B cell (primary cell): ENCODE measurements at regions of chr16 and their contacts with region 1.

Region 1: DNA sequence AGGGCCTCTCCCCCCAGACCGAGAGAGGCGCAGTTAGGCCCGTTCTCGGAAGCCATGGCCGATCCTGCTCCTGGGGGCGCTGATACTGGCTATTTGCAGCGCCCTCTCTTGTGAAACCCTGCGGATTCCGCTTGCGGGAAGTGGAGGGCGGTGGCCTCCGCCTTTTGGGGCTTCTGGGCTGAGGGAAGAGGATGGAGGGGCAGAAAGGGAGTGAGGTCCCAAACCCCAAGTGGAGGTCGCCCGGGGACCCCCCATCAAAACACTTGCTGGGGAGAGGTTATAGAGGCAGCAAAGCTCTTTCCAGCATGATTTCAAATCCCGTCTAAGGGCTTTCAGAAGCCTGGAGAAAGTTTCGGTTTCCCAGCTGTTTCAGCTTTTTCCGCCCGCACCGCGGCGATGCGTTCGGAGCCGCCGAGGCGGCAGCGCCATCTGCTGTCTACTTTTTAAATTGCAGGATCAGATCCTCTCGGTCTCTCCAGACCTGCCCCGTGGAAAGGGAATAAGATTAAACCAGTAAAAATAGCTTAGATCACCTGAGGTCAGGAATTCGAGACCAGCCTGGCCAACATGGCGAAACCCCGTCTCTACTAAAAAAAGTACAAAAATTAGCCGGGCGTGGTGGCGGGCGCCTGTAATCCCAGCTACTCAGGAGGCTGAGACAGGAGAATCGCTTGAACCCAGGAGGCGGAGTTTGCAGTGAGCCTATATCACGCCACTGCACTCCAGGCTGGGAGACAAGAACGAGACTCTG is 15.8 kb downstream of the SNX20 start:
- DNase-seq: peak; percentile 81
- ATAC-seq: peak; percentile 71
- H3K4me3 ChIP-seq: peak overlapping the region; percentile 43 to 59 (median 49)
- H3K4me3 Mint-ChIP-seq: peak overlapping the region; percentile 86
- H3K27ac ChIP-seq: peak overlapping the region in 1 of 2 donors; percentile 7
- H3K27ac Mint-ChIP-seq: peak overlapping the region; percentile 79
- H3K4me1 ChIP-seq: peaks cover 10 to 21% of the 10 kb centered on the region in 2 donors
- H3K4me1 Mint-ChIP-seq: peaks cover 25% of the 10 kb centered on the region
- H3K27me3 ChIP-seq: no peaks in the 10 kb centered on the region
- H3K27me3 Mint-ChIP-seq: no peaks in the 10 kb centered on the region
- CTCF ChIP-seq: peak; percentile 93

Region 2: GRCh38 chr16:49183911-49184310 is 1481.4 kb before region 1 on chr16:
- CTCF ChIA-PET with region 1: no interaction called
- POLR2A ChIA-PET with region 1: no interaction called
- intact Hi-C with region 1: no loop called
- DNase-seq: no peak
- ATAC-seq: no peak
- H3K4me3 ChIP-seq: no peak overlapping the region
- H3K4me3 Mint-ChIP-seq: no peak overlapping the region
- H3K27ac ChIP-seq: no peak overlapping the region
- H3K27ac Mint-ChIP-seq: no peak overlapping the region
- H3K4me1 ChIP-seq: no peaks in the 10 kb centered on the region
- H3K4me1 Mint-ChIP-seq: no peaks in the 10 kb centered on the region
- H3K27me3 ChIP-seq: no peaks in the 10 kb centered on the region
- H3K27me3 Mint-ChIP-seq: no peaks in the 10 kb centered on the region
- CTCF ChIP-seq: no peak

Region 3: DNA sequence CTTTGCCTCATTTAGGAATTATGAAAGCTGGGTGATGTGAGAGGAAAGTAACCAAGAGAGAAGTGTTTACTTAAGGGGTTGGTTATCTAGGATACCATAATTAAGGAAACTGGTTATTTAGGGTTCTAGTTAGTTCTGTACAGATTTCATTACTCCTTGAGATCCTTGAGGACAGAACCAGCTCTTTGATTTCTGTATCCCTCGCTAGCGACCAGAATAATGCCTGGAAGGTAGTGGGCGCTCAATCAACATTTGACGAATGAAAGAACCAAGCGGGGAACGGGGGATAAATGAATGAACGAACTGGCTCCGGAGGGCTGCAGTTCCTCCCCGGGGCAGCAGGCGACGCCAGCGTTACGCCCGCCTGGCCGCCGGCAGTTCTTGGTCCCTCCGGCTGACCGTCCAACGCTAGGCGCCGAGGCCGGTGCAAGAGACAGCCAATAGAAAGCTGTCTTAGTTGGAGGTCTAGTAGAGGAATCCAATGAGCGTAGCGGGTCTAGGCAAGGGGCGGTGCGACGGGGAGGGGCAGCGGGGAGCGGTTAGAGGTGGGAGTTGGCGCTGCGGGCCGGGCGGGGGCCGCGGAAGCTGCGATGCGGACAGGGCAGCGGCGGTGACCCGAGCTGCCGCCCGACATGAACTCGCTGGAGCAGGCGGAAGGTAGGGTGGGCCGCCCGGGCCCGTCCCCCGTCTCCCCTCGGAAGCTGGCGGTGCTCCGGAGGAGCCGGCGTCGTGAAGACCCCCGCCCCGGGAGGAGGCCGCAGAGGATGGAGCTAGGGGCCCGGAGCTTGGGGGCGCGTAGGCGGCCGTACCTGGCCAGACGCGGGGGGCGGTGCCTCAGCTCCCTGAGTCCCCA is 640.4 kb before region 1 on chr16 and contains the start of gene CNEP1R1:
- CTCF ChIA-PET with region 1: interaction called, 33 read pairs
- POLR2A ChIA-PET with region 1: no interaction called
- intact Hi-C with region 1: loop called (anchors 5 kb)
- DNase-seq: peak; percentile 98
- ATAC-seq: peak; percentile 94
- H3K4me3 ChIP-seq: peak within 1 kb of the TSS; percentile 87 to 93 (median 92)
- H3K4me3 Mint-ChIP-seq: peak within 1 kb of the TSS; percentile 93
- H3K27ac ChIP-seq: peak within 1 kb of the TSS; percentile 31 to 78
- H3K27ac Mint-ChIP-seq: peak within 1 kb of the TSS; percentile 89
- H3K4me1 ChIP-seq: peaks cover 12 to 14% of the 10 kb centered on the region in 2 donors
- H3K4me1 Mint-ChIP-seq: peaks cover 23% of the 10 kb centered on the region
- H3K27me3 ChIP-seq: no peaks in the 10 kb centered on the region
- H3K27me3 Mint-ChIP-seq: peaks cover 7% of the 10 kb centered on the region
- CTCF ChIP-seq: peak; percentile 100
- total RNA-seq, gene CNEP1R1: 32.9 and 36.9 TPM in 2 replicates

Region 4: DNA sequence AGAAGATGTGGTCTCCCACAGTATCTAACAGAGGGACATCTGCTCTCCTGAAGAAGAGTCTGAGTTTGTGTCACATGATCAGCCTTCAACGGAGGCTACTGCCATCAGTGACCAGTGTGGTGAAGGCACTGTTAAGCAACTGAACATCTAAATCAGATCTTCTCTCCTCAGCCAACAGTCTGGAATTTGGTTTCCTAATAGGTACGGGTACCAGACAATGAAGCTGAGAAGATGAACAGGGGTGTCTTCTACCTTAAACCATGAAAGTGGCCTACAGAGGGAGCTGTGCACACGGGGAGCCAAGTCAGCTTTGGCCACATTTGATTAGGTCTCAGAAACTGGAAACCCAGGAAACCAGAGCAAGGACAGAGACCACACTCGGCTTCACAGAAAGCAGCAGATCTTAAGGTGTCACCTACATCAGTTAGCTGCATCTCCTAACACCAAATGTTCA is 338.3 kb before region 1 on chr16:
- CTCF ChIA-PET with region 1: interaction called, 33 read pairs
- POLR2A ChIA-PET with region 1: no interaction called
- intact Hi-C with region 1: loop called (anchors 1 kb)
- DNase-seq: peak; percentile 50
- ATAC-seq: peak; percentile 85
- H3K4me3 ChIP-seq: no peak overlapping the region
- H3K4me3 Mint-ChIP-seq: peak overlapping the region; percentile 24
- H3K27ac ChIP-seq: peak overlapping the region; percentile 38 to 63
- H3K27ac Mint-ChIP-seq: peak overlapping the region; percentile 74
- H3K4me1 ChIP-seq: peaks cover 0 to 31% of the 10 kb centered on the region in 2 donors
- H3K4me1 Mint-ChIP-seq: peaks cover 51% of the 10 kb centered on the region
- H3K27me3 ChIP-seq: no peaks in the 10 kb centered on the region
- H3K27me3 Mint-ChIP-seq: no peaks in the 10 kb centered on the region
- CTCF ChIP-seq: peak; percentile 76

Region 5: GRCh38 chr16:50368410-50369132 is 296.7 kb before region 1 on chr16 and contains the start of gene BRD7:
- CTCF ChIA-PET with region 1: interaction called, 16 read pairs
- POLR2A ChIA-PET with region 1: no interaction called
- intact Hi-C with region 1: loop called (anchors 2 kb)
- DNase-seq: peak; percentile 85
- ATAC-seq: peak; percentile 95
- H3K4me3 ChIP-seq: peak within 1 kb of the TSS; percentile 45 to 82 (median 66)
- H3K4me3 Mint-ChIP-seq: peak within 1 kb of the TSS; percentile 91
- H3K27ac ChIP-seq: peak within 1 kb of the TSS; percentile 57 to 88
- H3K27ac Mint-ChIP-seq: peak within 1 kb of the TSS; percentile 88
- H3K4me1 ChIP-seq: peaks cover 26 to 32% of the 10 kb centered on the region in 2 donors
- H3K4me1 Mint-ChIP-seq: peaks cover 41% of the 10 kb centered on the region
- H3K27me3 ChIP-seq: no peaks in the 10 kb centered on the region
- H3K27me3 Mint-ChIP-seq: peaks cover 4% of the 10 kb centered on the region
- CTCF ChIP-seq: peak; percentile 56
- total RNA-seq, gene BRD7: 64.5 and 69.7 TPM in 2 replicates

Region 6: GRCh38 chr16:50651835-50652438 is 13.4 kb before region 1 on chr16:
- CTCF ChIA-PET with region 1: interaction called, 16 read pairs
- POLR2A ChIA-PET with region 1: no interaction called
- intact Hi-C with region 1: no loop called
- DNase-seq: no peak
- ATAC-seq: no peak
- H3K4me3 ChIP-seq: no peak overlapping the region
- H3K4me3 Mint-ChIP-seq: no peak overlapping the region
- H3K27ac ChIP-seq: no peak overlapping the region
- H3K27ac Mint-ChIP-seq: no peak overlapping the region
- H3K4me1 ChIP-seq: no peaks in the 10 kb centered on the region
- H3K4me1 Mint-ChIP-seq: no peaks in the 10 kb centered on the region
- H3K27me3 ChIP-seq: no peaks in the 10 kb centered on the region
- H3K27me3 Mint-ChIP-seq: no peaks in the 10 kb centered on the region
- CTCF ChIP-seq: no peak

Region 7: GRCh38 chr16:50741808-50742575 is 76.7 kb after region 1 on chr16 and contains the start of gene CYLD:
- CTCF ChIA-PET with region 1: interaction called, 120 read pairs
- POLR2A ChIA-PET with region 1: interaction called, 4 read pairs
- intact Hi-C with region 1: loop called (anchors 1 kb)
- DNase-seq: peak; percentile 100
- ATAC-seq: peak; percentile 86
- H3K4me3 ChIP-seq: peak within 1 kb of the TSS; percentile 75 to 96 (median 85)
- H3K4me3 Mint-ChIP-seq: peak within 1 kb of the TSS; percentile 91
- H3K27ac ChIP-seq: peak within 1 kb of the TSS; percentile 100
- H3K27ac Mint-ChIP-seq: peak within 1 kb of the TSS; percentile 97
- H3K4me1 ChIP-seq: peaks cover 34% of the 10 kb centered on the region in 2 donors
- H3K4me1 Mint-ChIP-seq: peaks cover 49% of the 10 kb centered on the region
- H3K27me3 ChIP-seq: no peaks in the 10 kb centered on the region
- H3K27me3 Mint-ChIP-seq: no peaks in the 10 kb centered on the region
- CTCF ChIP-seq: no peak
- total RNA-seq, gene CYLD: 160 and 166 TPM in 2 replicates

Region 8: GRCh38 chr16:50747207-50747956 is 82.1 kb after region 1 on chr16:
- CTCF ChIA-PET with region 1: interaction called, 120 read pairs
- POLR2A ChIA-PET with region 1: interaction called, 4 read pairs
- intact Hi-C with region 1: loop called (anchors 1 kb)
- DNase-seq: peak; percentile 60
- ATAC-seq: peak; percentile 61
- H3K4me3 ChIP-seq: no peak overlapping the region
- H3K4me3 Mint-ChIP-seq: peak overlapping the region; percentile 74
- H3K27ac ChIP-seq: peak overlapping the region in 1 of 2 donors; percentile 58
- H3K27ac Mint-ChIP-seq: peak overlapping the region; percentile 59
- H3K4me1 ChIP-seq: peaks cover 33 to 39% of the 10 kb centered on the region in 2 donors
- H3K4me1 Mint-ChIP-seq: peaks cover 55% of the 10 kb centered on the region
- H3K27me3 ChIP-seq: no peaks in the 10 kb centered on the region
- H3K27me3 Mint-ChIP-seq: no peaks in the 10 kb centered on the region
- CTCF ChIP-seq: peak; percentile 74